ENCODE measurements at regions of chr19 and their contacts with region 1.

Region 1: GRCh38 chr19:43463381-43464136 is 1.8 kb downstream of the LYPD3 start:
- DNase-seq: peak; percentile 98 to 100 (median 100)
- ATAC-seq: peak; percentile 80 to 81
- H3K4me3 Mint-ChIP-seq: peak overlapping the region; percentile 81 to 98 (median 94)
- H3K27ac Mint-ChIP-seq: peak overlapping the region; percentile 95 to 100 (median 99)
- H3K4me1 Mint-ChIP-seq: peaks cover 36 to 64% (median 55%) of the 10 kb centered on the region in 4 donors
- H3K27me3 Mint-ChIP-seq: no peaks in the 10 kb centered on the region

Region 2: GRCh38 chr19:43265664-43266025 is 197.9 kb before region 1 on chr19:
- POLR2A ChIA-PET with region 1: no interaction called
- DNase-seq: no peak
- ATAC-seq: no peak
- H3K4me3 Mint-ChIP-seq: no peak overlapping the region
- H3K27ac Mint-ChIP-seq: no peak overlapping the region
- H3K4me1 Mint-ChIP-seq: peaks cover 0 to under 1% (median 0%) of the 10 kb centered on the region in 4 donors
- H3K27me3 Mint-ChIP-seq: peaks cover 3 to 44% (median 14%) of the 10 kb centered on the region in 5 donors

Region 3: GRCh38 chr19:43425567-43426392 is 37.8 kb before region 1 on chr19:
- POLR2A ChIA-PET with region 1: no interaction called
- DNase-seq: peak in 1 of 10 donors; percentile 14
- ATAC-seq: peak in 1 of 2 donors; percentile 39
- H3K4me3 Mint-ChIP-seq: peak overlapping the region in 1 of 10 donors; percentile 15
- H3K27ac Mint-ChIP-seq: peak overlapping the region in 5 of 10 donors; percentile 5 to 74 (median 61)
- H3K4me1 Mint-ChIP-seq: peaks cover 0 to 15% (median 11%) of the 10 kb centered on the region in 4 donors
- H3K27me3 Mint-ChIP-seq: peaks cover 0 to 3% (median 0%) of the 10 kb centered on the region in 5 donors

Region 4: DNA sequence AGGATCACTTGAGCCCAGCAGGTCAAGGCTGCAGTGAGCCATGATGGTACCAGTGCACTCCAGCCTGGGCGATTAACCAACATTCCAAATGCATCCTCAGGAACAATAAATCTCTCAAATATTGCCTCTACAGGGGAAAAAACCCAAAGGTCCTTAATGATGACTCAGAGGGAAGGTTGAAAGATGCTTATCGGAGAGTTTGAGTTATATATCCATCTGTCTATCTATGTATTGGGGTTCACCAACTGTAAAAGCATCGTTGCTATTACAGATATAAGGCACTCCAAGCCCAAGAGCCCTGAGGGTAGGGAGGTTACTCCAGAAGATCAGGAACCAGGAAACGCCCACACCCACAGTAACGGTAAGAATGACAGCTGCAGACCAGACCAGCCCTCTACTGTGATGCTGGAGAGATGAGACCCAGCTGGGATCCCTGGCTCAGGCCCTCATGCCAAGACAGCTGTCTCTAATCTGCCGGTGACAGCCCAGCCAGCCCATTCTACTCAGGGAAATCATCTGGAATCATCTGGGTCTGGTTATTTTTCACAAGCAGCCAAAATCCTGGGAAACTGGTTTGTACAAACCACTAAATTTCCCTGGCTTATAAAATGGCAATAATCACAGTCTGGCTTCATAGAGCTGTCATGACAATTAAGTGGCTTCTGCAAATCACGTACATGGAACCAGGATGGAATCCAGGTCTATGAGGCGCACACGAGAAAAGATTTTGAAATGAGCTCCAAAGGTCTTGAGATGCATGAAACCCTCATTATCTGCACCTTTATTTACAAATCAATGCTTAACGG is 25.1 kb before region 1 on chr19:
- POLR2A ChIA-PET with region 1: interaction called, 51 read pairs
- DNase-seq: no peak
- ATAC-seq: peak; percentile 8 to 33
- H3K4me3 Mint-ChIP-seq: peak overlapping the region in 9 of 10 donors; percentile 19 to 66 (median 56)
- H3K27ac Mint-ChIP-seq: peak overlapping the region; percentile 74 to 98 (median 94)
- H3K4me1 Mint-ChIP-seq: peaks cover 17 to 62% (median 52%) of the 10 kb centered on the region in 4 donors
- H3K27me3 Mint-ChIP-seq: no peaks in the 10 kb centered on the region

Region 5: GRCh38 chr19:43474986-43475705 is 11.6 kb after region 1 on chr19:
- POLR2A ChIA-PET with region 1: interaction called, 71 read pairs
- DNase-seq: peak; percentile 88 to 98 (median 98)
- ATAC-seq: peak; percentile 85 to 92
- H3K4me3 Mint-ChIP-seq: peak overlapping the region; percentile 81 to 93 (median 86)
- H3K27ac Mint-ChIP-seq: peak overlapping the region; percentile 92 to 100 (median 99)
- H3K4me1 Mint-ChIP-seq: peaks cover 18 to 52% (median 43%) of the 10 kb centered on the region in 4 donors
- H3K27me3 Mint-ChIP-seq: no peaks in the 10 kb centered on the region

Region 6: DNA sequence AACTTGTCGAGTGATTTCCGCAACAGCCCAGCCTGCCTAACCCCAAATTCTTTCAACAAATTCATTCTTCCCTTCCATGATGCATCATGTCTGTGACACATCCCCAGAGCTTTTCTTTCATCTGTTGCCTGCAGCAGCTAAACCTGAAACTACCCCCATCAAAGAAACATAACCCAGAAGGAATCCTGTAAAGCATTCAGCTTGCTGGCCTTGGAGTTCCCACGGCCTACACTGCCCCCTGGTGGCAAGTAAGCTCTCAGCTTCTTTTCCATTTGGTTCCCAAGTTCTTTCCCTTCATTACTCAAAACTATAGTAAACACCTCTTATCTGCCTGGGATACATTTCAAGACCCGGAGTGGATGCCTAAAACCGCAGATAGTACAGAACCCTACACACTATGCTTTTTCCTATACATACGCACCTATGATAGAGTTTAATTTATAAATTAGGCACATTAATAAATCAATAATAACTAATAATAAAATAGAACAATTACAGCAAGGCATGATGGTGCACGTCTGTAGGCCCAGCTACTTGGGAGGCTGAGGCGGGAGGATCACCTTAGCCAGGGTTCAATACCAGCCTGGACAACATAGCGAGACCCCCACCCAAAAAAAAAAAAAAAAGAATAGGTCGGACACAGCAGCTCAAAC is 56.0 kb after region 1 on chr19:
- POLR2A ChIA-PET with region 1: interaction called, 21 read pairs
- DNase-seq: peak; percentile 69 to 88 (median 78)
- ATAC-seq: peak; percentile 89 to 95
- H3K4me3 Mint-ChIP-seq: peak overlapping the region in 3 of 10 donors; percentile 2 to 16 (median 13)
- H3K27ac Mint-ChIP-seq: peak overlapping the region in 6 of 10 donors; percentile 23 to 73 (median 44)
- H3K4me1 Mint-ChIP-seq: peaks cover 9 to 17% (median 16%) of the 10 kb centered on the region in 4 donors
- H3K27me3 Mint-ChIP-seq: no peaks in the 10 kb centered on the region

Region 7: GRCh38 chr19:43532962-43533545 is 69.5 kb after region 1 on chr19 and contains the start of gene ZNF575:
- POLR2A ChIA-PET with region 1: interaction called, 24 read pairs
- DNase-seq: peak; percentile 70 to 93 (median 82)
- ATAC-seq: peak; percentile 60 to 70
- H3K4me3 Mint-ChIP-seq: peak within 1 kb of the TSS; percentile 88 to 100 (median 97)
- H3K27ac Mint-ChIP-seq: peak within 1 kb of the TSS; percentile 90 to 99 (median 98)
- H3K4me1 Mint-ChIP-seq: peaks cover 13 to 32% (median 20%) of the 10 kb centered on the region in 4 donors
- H3K27me3 Mint-ChIP-seq: no peaks in the 10 kb centered on the region
- polyA plus RNA-seq, gene ZNF575: 1.7 to 4.1 (median 3.0) TPM